ENCODE measurements at regions of chr22 and their contacts with region 1.

Region 1: DNA sequence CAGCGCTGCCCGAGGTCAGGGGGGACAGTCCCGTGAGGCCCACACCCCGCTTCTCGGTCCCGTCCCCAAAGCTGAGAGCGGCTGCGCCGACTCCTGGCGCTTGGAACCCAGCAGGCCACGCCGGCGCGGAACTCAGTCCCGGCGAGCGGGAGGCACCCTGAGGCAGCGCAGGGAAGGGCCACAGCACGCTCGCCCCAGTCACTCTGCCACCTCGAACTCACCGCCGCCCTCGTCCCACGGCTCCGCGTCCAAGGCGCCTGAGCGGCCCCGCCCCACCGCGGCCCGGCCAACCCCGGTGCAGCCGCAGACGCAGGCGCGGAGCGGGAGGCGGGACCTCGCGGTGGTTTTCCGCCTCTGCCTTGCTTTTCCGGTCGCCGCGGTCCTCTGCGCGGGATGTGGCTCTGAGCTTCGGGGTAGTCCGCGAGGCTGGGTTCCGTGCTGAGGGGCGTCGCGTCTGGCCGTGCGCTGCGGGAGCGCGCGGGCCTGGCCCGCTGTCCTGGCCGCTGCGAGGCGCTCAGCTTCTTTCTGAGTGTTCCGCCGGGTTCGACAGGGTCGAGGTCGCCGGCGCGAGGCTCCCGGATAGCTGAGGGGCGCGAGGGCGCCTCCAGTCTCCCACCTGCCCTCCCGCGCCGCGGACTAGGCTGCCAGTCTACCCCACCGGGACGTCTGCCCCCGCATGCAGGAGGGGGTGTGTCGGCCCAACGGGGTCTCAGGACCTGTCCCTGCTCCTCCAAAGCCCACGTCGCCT is at the start of gene CDPF1:
- DNase-seq: peak; percentile 88 to 95
- H3K4me3 ChIP-seq: peak within 1 kb of the TSS; percentile 78
- H3K4me3 Mint-ChIP-seq: peak within 1 kb of the TSS; percentile 93
- H3K27ac Mint-ChIP-seq: peak within 1 kb of the TSS; percentile 90
- H3K4me1 ChIP-seq: peaks cover 12% of the 10 kb centered on the region
- H3K4me1 Mint-ChIP-seq: peaks cover 7% of the 10 kb centered on the region
- H3K27me3 ChIP-seq: no peaks in the 10 kb centered on the region
- H3K27me3 Mint-ChIP-seq: no peaks in the 10 kb centered on the region
- CTCF ChIP-seq: no peak
- total RNA-seq, gene CDPF1: 7.2 and 8.8 TPM in 2 replicates

Region 2: GRCh38 chr22:46267431-46268279 is 17.4 kb after region 1 on chr22 and contains the start of gene TTC38:
- CTCF ChIA-PET with region 1: no interaction called
- POLR2A ChIA-PET with region 1: interaction called, 8 read pairs
- intact Hi-C with region 1: loop called (anchors 1 kb)
- DNase-seq: peak; percentile 89 to 90
- H3K4me3 ChIP-seq: peak within 1 kb of the TSS; percentile 80
- H3K4me3 Mint-ChIP-seq: peak within 1 kb of the TSS; percentile 90
- H3K27ac Mint-ChIP-seq: peak within 1 kb of the TSS; percentile 75
- H3K4me1 ChIP-seq: peaks cover 16% of the 10 kb centered on the region
- H3K4me1 Mint-ChIP-seq: no peaks in the 10 kb centered on the region
- H3K27me3 ChIP-seq: no peaks in the 10 kb centered on the region
- H3K27me3 Mint-ChIP-seq: no peaks in the 10 kb centered on the region
- CTCF ChIP-seq: no peak
- total RNA-seq, gene TTC38: 44.5 and 48.9 TPM in 2 replicates

Measured in Caco-2 (cell line).